ENCODE measurements at regions of chrX and their contacts with region 1.

Region 1: GRCh38 chrX:13506574-13506973 is 62.8 kb upstream of the EGFL6 start:
- DNase-seq: peak in 4 of 5 donors; percentile 31 to 65 (median 45)
- H3K4me3 ChIP-seq: no peak overlapping the region
- H3K27ac ChIP-seq: no peak overlapping the region
- H3K4me1 ChIP-seq: no peaks in the 10 kb centered on the region
- H3K27me3 ChIP-seq: peaks cover 3% of the 10 kb centered on the region
- CTCF ChIP-seq: peak; percentile 65

Region 2: GRCh38 chrX:13646154-13646549 is 139.6 kb after region 1 on chrX:
- intact Hi-C with region 1: loop called (anchors 10 kb)
- DNase-seq: peak in 4 of 5 donors; percentile 52 to 87 (median 72)
- H3K4me3 ChIP-seq: no peak overlapping the region
- H3K27ac ChIP-seq: no peak overlapping the region
- H3K4me1 ChIP-seq: no peaks in the 10 kb centered on the region
- H3K27me3 ChIP-seq: peaks cover 18% of the 10 kb centered on the region
- CTCF ChIP-seq: peak; percentile 61

Region 3: GRCh38 chrX:14029425-14030173 is 523.0 kb after region 1 on chrX and contains the start of gene GEMIN8:
- intact Hi-C with region 1: loop called (anchors 10 kb)
- DNase-seq: peak; percentile 90 to 97 (median 94)
- H3K4me3 ChIP-seq: peak within 1 kb of the TSS; percentile 72 to 82 (median 77)
- H3K27ac ChIP-seq: peak within 1 kb of the TSS; percentile 74 to 84
- H3K4me1 ChIP-seq: peaks cover 0 to 5% (median 0%) of the 10 kb centered on the region in 3 donors
- H3K27me3 ChIP-seq: peaks cover 11% of the 10 kb centered on the region
- CTCF ChIP-seq: no peak
- total RNA-seq, gene GEMIN8: 30.0 TPM